Activated T-helper 2 cell treated with anti-CD3 and anti-CD28 coated beads, Interferon-gamma antibody, Interleukin-2, Interleukin-4, amounts not matched to agents 10 μg/mL and 5 μg/mL and 100 μg/mL, durations not matched to agents 14 hours and 24 hours and 36 hours (primary cell): ENCODE measurements at regions of chr3 and their contacts with region 1.

Region 1: DNA sequence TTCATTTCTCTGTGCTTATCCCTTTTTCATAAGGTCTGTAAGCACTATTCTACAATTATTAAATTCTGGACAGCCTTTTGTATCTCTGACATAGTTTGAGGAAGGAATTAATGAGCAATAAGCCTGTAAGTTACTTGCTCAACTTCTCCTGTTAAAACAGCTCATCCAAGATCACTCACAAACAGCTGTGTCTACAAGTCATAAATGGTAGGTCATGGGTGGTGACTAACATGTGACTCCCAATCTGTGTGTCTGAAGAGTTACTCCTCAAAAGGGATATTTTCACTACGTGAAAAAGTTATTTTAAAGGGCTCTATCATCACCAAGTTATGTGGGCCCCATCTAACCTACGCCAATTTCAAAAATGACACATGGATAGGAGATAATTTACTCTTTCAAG is 145.2 kb upstream of the CBLB start:
- DNase-seq: no peak
- H3K4me3 Mint-ChIP-seq: no peak overlapping the region
- H3K27ac Mint-ChIP-seq: peak overlapping the region; percentile 5
- H3K4me1 Mint-ChIP-seq: peaks cover 45% of the 10 kb centered on the region
- H3K27me3 Mint-ChIP-seq: no peaks in the 10 kb centered on the region

Region 2: GRCh38 chr3:105366326-105367062 is 647.5 kb before region 1 on chr3 and contains the start of gene ALCAM:
- intact Hi-C with region 1: loop called (anchors 2 kb)
- DNase-seq: peak; percentile 77
- H3K4me3 Mint-ChIP-seq: peak within 1 kb of the TSS; percentile 94
- H3K27ac Mint-ChIP-seq: peak within 1 kb of the TSS; percentile 100
- H3K4me1 Mint-ChIP-seq: peaks cover 44% of the 10 kb centered on the region
- H3K27me3 Mint-ChIP-seq: peaks cover 22% of the 10 kb centered on the region
- total RNA-seq, gene ALCAM: 36.7 and 37.3 TPM in 2 replicates

Region 3: DNA sequence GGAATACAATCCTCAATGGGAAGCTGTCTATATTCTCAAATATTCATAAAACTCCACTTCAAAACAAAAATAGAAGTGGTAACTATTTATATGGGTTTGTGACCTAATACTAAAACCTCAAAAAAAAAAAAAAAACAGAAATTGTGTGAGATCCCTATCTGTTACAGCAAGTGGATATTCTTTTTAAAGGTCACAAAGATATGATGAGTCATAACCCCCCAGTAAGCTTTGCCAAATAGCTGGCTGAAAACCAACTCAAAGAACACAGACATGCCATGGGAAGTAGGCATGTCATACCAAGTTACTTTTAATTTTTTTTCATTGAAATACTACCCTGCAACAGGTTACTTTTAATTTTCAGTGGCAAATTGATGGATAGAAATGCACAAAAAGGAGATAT is 207.6 kb before region 1 on chr3:
- intact Hi-C with region 1: loop called (anchors 5 kb)
- DNase-seq: no peak
- H3K4me3 Mint-ChIP-seq: no peak overlapping the region
- H3K27ac Mint-ChIP-seq: peak overlapping the region; percentile 68
- H3K4me1 Mint-ChIP-seq: peaks cover 66% of the 10 kb centered on the region
- H3K27me3 Mint-ChIP-seq: no peaks in the 10 kb centered on the region

Region 4: DNA sequence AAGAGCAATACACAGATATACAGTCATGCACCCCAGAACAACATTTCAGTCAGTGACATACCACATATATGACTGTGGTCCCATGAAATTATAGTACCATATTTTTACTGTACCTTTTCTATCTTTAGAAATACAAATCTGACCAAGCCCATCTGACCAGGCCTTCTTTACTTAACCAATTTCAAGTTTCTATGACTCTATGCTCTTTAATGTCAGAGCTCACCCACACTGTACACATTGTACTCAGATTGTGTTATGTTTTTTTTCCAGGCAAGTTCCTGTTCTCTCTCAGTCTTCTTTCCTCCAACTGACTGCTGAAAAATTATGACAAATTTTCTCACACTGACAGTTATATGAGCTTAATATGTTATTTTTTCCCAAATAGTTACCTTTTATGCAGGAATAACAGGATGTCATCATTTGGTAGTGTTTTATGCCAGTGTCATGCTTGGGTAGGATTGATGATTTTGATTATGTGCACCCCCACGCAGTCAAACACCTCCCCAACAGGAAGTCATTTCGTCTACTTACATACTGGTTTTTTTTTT is 137.1 kb before region 1 on chr3:
- intact Hi-C with region 1: loop called (anchors 1 kb)
- DNase-seq: no peak
- H3K4me3 Mint-ChIP-seq: peak overlapping the region; percentile 34
- H3K27ac Mint-ChIP-seq: peak overlapping the region; percentile 75
- H3K4me1 Mint-ChIP-seq: peaks cover 32% of the 10 kb centered on the region
- H3K27me3 Mint-ChIP-seq: no peaks in the 10 kb centered on the region

Region 5: GRCh38 chr3:106058475-106058874 is 44.5 kb after region 1 on chr3:
- intact Hi-C with region 1: no loop called
- DNase-seq: no peak
- H3K4me3 Mint-ChIP-seq: no peak overlapping the region
- H3K27ac Mint-ChIP-seq: no peak overlapping the region
- H3K4me1 Mint-ChIP-seq: peaks cover 16% of the 10 kb centered on the region
- H3K27me3 Mint-ChIP-seq: no peaks in the 10 kb centered on the region

Region 6: DNA sequence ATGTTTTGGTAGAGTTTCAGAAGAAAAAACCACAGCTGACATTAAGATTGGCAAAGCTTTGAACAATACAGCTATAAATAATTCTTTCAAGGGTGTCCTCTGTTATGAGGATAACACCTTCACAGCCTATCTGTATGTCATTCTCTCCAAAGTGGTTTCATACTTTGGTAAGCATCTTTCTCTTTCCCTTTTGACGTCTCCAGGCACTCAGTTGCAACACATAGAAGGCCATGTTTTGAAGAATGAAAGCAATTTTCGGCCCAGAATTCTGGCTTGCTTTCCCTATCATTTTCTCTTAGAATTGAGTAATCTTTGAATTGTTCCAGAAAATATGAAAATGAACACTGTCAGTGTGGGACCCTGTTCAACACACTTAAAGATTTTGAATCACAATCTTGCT is 54.8 kb after region 1 on chr3:
- intact Hi-C with region 1: loop called (anchors 2 kb)
- DNase-seq: no peak
- H3K4me3 Mint-ChIP-seq: no peak overlapping the region
- H3K27ac Mint-ChIP-seq: peak overlapping the region; percentile 83
- H3K4me1 Mint-ChIP-seq: peaks cover 15% of the 10 kb centered on the region
- H3K27me3 Mint-ChIP-seq: no peaks in the 10 kb centered on the region

Region 7: GRCh38 chr3:106183762-106184391 is 169.9 kb after region 1 on chr3:
- intact Hi-C with region 1: loop called (anchors 2 kb)
- DNase-seq: no peak
- H3K4me3 Mint-ChIP-seq: no peak overlapping the region
- H3K27ac Mint-ChIP-seq: peak overlapping the region; percentile 35
- H3K4me1 Mint-ChIP-seq: peaks cover 51% of the 10 kb centered on the region
- H3K27me3 Mint-ChIP-seq: no peaks in the 10 kb centered on the region

Region 8: GRCh38 chr3:106473576-106474475 is 459.9 kb after region 1 on chr3:
- intact Hi-C with region 1: loop called (anchors 5 kb)
- DNase-seq: no peak
- H3K4me3 Mint-ChIP-seq: no peak overlapping the region
- H3K27ac Mint-ChIP-seq: peak overlapping the region; percentile 84
- H3K4me1 Mint-ChIP-seq: peaks cover 7% of the 10 kb centered on the region
- H3K27me3 Mint-ChIP-seq: no peaks in the 10 kb centered on the region

Region 9: DNA sequence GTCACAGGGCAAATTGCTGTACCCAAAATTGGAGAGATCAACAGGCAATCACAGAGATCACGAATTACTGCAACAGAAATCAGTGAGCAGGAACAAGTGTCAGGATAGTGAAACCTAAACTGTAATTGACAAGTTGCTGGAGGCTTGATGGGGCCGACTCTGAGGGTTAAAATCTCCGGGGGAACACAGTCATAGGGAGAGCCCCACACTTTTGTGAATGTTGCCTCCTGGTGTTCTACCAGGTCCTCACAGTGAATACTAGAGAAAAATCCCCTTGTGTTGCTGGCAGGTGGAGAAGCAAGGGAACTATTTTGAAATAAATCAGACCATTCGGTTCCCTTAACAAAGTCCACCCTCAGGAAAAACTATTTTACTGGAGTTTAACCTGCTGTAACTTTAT is 552.3 kb after region 1 on chr3:
- intact Hi-C with region 1: no loop called
- DNase-seq: no peak
- H3K4me3 Mint-ChIP-seq: no peak overlapping the region
- H3K27ac Mint-ChIP-seq: no peak overlapping the region
- H3K4me1 Mint-ChIP-seq: peaks cover 6% of the 10 kb centered on the region
- H3K27me3 Mint-ChIP-seq: no peaks in the 10 kb centered on the region